ENCODE measurements at regions of chr1 and their contacts with region 1.

Region 1: GRCh38 chr1:198520524-198521254 is 19.8 kb downstream of the ATP6V1G3 start:
- DNase-seq: peak in 1 of 2 donors; percentile 60
- ATAC-seq: peak; percentile 77 to 84 (median 83)
- H3K4me3 ChIP-seq: peak overlapping the region; percentile 24
- H3K4me3 Mint-ChIP-seq: peak overlapping the region; percentile 82
- H3K27ac ChIP-seq: peak overlapping the region; percentile 93
- H3K27ac Mint-ChIP-seq: peak overlapping the region; percentile 88 to 89
- H3K4me1 ChIP-seq: peaks cover 27% of the 10 kb centered on the region
- H3K4me1 Mint-ChIP-seq: peaks cover 75 to 80% of the 10 kb centered on the region in 2 donors
- H3K27me3 ChIP-seq: no peaks in the 10 kb centered on the region
- H3K27me3 Mint-ChIP-seq: no peaks in the 10 kb centered on the region
- CTCF ChIP-seq: no peak

Region 2: DNA sequence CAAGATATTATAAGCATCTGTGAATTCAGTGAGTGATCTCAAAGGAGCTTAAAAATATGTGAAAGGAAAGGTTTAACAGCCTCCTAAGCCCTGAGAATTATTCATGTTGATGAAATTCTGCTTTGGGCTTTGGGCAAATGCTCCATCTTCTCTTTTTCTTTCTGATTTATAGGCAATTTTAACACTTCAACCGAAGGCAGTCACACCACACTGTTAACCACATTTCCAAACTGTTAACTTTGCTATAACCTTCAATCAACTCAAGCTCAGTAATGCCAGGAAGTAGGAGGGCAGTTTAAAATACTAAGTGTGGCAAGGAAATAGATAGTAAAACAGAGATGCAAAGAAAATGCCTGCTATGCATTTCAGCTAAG is 418.2 kb before region 1 on chr1:
- intact Hi-C with region 1: loop called (anchors 5 kb)
- DNase-seq: peak in 1 of 2 donors; percentile 67
- ATAC-seq: peak; percentile 80 to 96 (median 84)
- H3K4me3 ChIP-seq: no peak overlapping the region
- H3K4me3 Mint-ChIP-seq: peak overlapping the region; percentile 76
- H3K27ac ChIP-seq: peak overlapping the region; percentile 43
- H3K27ac Mint-ChIP-seq: peak overlapping the region; percentile 65 to 73
- H3K4me1 ChIP-seq: peaks cover 12% of the 10 kb centered on the region
- H3K4me1 Mint-ChIP-seq: peaks cover 28 to 29% of the 10 kb centered on the region in 2 donors
- H3K27me3 ChIP-seq: no peaks in the 10 kb centered on the region
- H3K27me3 Mint-ChIP-seq: peaks cover 0 to 4% of the 10 kb centered on the region in 2 donors
- CTCF ChIP-seq: no peak

Region 3: GRCh38 chr1:198497346-198498102 is 23.2 kb before region 1 on chr1:
- intact Hi-C with region 1: no loop called
- DNase-seq: no peak
- ATAC-seq: peak in 2 of 3 donors; percentile 50 to 64
- H3K4me3 ChIP-seq: no peak overlapping the region
- H3K4me3 Mint-ChIP-seq: no peak overlapping the region
- H3K27ac ChIP-seq: no peak overlapping the region
- H3K27ac Mint-ChIP-seq: peak overlapping the region in 1 of 2 donors; percentile 33
- H3K4me1 ChIP-seq: peaks cover 7% of the 10 kb centered on the region
- H3K4me1 Mint-ChIP-seq: peaks cover 20 to 34% of the 10 kb centered on the region in 2 donors
- H3K27me3 ChIP-seq: no peaks in the 10 kb centered on the region
- H3K27me3 Mint-ChIP-seq: no peaks in the 10 kb centered on the region
- CTCF ChIP-seq: no peak

Region 4: GRCh38 chr1:198534548-198535418 is 14.1 kb after region 1 on chr1:
- intact Hi-C with region 1: no loop called
- DNase-seq: peak in 1 of 2 donors; percentile 31
- ATAC-seq: no peak
- H3K4me3 ChIP-seq: no peak overlapping the region
- H3K4me3 Mint-ChIP-seq: peak overlapping the region; percentile 76
- H3K27ac ChIP-seq: peak overlapping the region; percentile 64
- H3K27ac Mint-ChIP-seq: peak overlapping the region; percentile 4 to 77
- H3K4me1 ChIP-seq: peaks cover 7% of the 10 kb centered on the region
- H3K4me1 Mint-ChIP-seq: peaks cover 19 to 24% of the 10 kb centered on the region in 2 donors
- H3K27me3 ChIP-seq: no peaks in the 10 kb centered on the region
- H3K27me3 Mint-ChIP-seq: no peaks in the 10 kb centered on the region
- CTCF ChIP-seq: no peak

Region 5: GRCh38 chr1:198620951-198621824 is 100.5 kb after region 1 on chr1:
- intact Hi-C with region 1: loop called (anchors 1 kb)
- DNase-seq: peak; percentile 53 to 86
- ATAC-seq: peak; percentile 70 to 87 (median 83)
- H3K4me3 ChIP-seq: peak overlapping the region; percentile 16
- H3K4me3 Mint-ChIP-seq: peak overlapping the region; percentile 95
- H3K27ac ChIP-seq: peak overlapping the region; percentile 94
- H3K27ac Mint-ChIP-seq: peak overlapping the region; percentile 91 to 99
- H3K4me1 ChIP-seq: peaks cover 54% of the 10 kb centered on the region
- H3K4me1 Mint-ChIP-seq: peaks cover 78 to 81% of the 10 kb centered on the region in 2 donors
- H3K27me3 ChIP-seq: no peaks in the 10 kb centered on the region
- H3K27me3 Mint-ChIP-seq: no peaks in the 10 kb centered on the region
- CTCF ChIP-seq: no peak

Region 6: DNA sequence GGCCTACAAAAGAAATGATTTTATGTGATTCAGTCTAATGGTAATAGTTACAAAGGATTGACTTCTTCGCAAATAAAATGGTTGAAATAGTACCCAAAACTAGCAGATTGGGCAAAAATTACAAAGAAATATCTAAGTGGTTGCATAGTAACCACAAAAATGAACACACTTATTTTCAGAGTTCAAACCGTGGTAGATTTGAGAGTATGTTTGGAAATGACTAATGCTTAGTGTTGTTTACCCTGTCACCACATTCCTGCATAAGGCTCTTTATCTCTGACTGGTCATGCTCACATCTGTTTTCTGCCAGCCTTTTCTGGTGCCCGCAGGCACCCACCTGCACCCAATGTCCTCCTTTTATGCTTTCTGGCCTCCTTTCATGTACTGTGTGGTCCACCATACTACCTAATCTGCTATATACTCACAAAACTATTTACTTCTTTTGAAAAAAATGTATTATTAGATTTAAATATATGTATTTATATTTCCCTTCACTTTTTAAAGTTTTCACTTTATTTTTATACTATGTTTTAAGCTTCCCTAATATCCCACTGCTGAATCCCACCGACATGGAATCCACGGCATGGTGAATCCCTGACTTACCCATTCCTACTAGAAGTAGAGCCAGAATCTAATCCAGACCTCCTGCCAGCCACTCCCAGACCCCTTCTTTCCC is 148.5 kb after region 1 on chr1:
- intact Hi-C with region 1: loop called (anchors 5 kb)
- DNase-seq: peak; percentile 55 to 78
- ATAC-seq: peak; percentile 81 to 89 (median 87)
- H3K4me3 ChIP-seq: no peak overlapping the region
- H3K4me3 Mint-ChIP-seq: peak overlapping the region; percentile 70
- H3K27ac ChIP-seq: peak overlapping the region; percentile 86
- H3K27ac Mint-ChIP-seq: peak overlapping the region; percentile 88 to 90
- H3K4me1 ChIP-seq: peaks cover 35% of the 10 kb centered on the region
- H3K4me1 Mint-ChIP-seq: peaks cover 82 to 83% of the 10 kb centered on the region in 2 donors
- H3K27me3 ChIP-seq: no peaks in the 10 kb centered on the region
- H3K27me3 Mint-ChIP-seq: no peaks in the 10 kb centered on the region
- CTCF ChIP-seq: no peak

Region 7: GRCh38 chr1:199173356-199173755 is 652.7 kb after region 1 on chr1:
- intact Hi-C with region 1: loop called (anchors 5 kb)
- DNase-seq: peak in 1 of 2 donors; percentile 77
- ATAC-seq: peak; percentile 77 to 92 (median 89)
- H3K4me3 ChIP-seq: no peak overlapping the region
- H3K4me3 Mint-ChIP-seq: peak overlapping the region; percentile 49
- H3K27ac ChIP-seq: peak overlapping the region; percentile 90
- H3K27ac Mint-ChIP-seq: peak overlapping the region; percentile 88 to 94
- H3K4me1 ChIP-seq: peaks cover 37% of the 10 kb centered on the region
- H3K4me1 Mint-ChIP-seq: peaks cover 65 to 78% of the 10 kb centered on the region in 2 donors
- H3K27me3 ChIP-seq: no peaks in the 10 kb centered on the region
- H3K27me3 Mint-ChIP-seq: no peaks in the 10 kb centered on the region
- CTCF ChIP-seq: no peak

Measured in natural killer cell (primary cell).